ENCODE measurements at regions of chr2 and their contacts with region 1.

Region 1: DNA sequence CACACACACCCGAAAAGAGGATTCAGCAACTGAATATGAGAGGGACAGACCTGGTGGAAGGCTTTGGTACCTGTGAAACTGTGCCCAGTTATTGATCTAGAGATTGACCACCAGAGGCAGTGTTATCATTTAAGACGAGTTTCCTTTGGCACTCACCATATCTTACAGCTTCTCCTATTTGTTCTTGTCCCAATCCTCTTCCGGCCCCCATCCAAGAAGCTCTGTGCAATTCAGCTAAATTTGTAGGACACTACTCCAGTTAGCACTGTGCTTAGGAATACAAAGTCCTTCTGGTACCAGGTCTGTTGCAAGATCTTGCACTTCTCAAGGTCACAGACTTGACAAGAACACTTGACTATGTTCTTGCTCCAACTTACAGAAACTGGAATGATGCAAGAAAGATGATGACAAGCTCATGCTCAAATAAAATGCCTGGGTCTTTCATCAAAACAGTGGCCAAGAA is 177.7 kb downstream of the TMEM247 start:
- H3K4me3 Mint-ChIP-seq: no peak overlapping the region
- H3K27ac Mint-ChIP-seq: no peak overlapping the region
- H3K4me1 Mint-ChIP-seq: no peaks in the 10 kb centered on the region
- H3K27me3 Mint-ChIP-seq: peaks cover 11% of the 10 kb centered on the region

Region 2: DNA sequence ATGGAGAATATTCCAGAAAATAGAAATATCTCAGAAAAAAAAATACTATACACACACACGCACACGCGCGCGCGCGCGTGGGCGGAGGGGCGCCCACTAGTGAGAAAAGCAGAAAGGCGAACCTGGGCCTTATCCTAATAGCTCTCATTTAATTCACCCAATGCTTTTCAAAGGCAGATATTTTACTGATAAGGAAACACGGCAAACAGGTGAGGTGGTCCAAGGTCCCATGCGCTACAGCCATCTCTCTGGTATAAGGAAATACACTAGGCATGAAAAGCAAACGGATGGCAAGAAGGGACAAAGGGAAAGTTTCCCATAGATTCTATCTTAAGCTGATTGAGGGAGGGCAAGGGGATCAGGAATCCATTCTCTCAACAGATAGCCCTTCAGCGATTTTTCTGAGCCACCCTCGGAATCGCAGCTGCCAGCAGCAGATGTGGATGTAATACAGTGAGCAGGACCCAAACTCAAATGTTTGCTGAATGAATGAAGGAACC is 41.0 kb before region 1 on chr2:
- intact Hi-C with region 1: no loop called
- H3K4me3 Mint-ChIP-seq: peak overlapping the region; percentile 97
- H3K27ac Mint-ChIP-seq: peak overlapping the region; percentile 97
- H3K4me1 Mint-ChIP-seq: peaks cover 22% of the 10 kb centered on the region
- H3K27me3 Mint-ChIP-seq: no peaks in the 10 kb centered on the region

Region 3: GRCh38 chr2:46776687-46777327 is 119.7 kb after region 1 on chr2:
- intact Hi-C with region 1: loop called (anchors 5 kb)
- H3K4me3 Mint-ChIP-seq: no peak overlapping the region
- H3K27ac Mint-ChIP-seq: no peak overlapping the region
- H3K4me1 Mint-ChIP-seq: no peaks in the 10 kb centered on the region
- H3K27me3 Mint-ChIP-seq: no peaks in the 10 kb centered on the region

Region 4: DNA sequence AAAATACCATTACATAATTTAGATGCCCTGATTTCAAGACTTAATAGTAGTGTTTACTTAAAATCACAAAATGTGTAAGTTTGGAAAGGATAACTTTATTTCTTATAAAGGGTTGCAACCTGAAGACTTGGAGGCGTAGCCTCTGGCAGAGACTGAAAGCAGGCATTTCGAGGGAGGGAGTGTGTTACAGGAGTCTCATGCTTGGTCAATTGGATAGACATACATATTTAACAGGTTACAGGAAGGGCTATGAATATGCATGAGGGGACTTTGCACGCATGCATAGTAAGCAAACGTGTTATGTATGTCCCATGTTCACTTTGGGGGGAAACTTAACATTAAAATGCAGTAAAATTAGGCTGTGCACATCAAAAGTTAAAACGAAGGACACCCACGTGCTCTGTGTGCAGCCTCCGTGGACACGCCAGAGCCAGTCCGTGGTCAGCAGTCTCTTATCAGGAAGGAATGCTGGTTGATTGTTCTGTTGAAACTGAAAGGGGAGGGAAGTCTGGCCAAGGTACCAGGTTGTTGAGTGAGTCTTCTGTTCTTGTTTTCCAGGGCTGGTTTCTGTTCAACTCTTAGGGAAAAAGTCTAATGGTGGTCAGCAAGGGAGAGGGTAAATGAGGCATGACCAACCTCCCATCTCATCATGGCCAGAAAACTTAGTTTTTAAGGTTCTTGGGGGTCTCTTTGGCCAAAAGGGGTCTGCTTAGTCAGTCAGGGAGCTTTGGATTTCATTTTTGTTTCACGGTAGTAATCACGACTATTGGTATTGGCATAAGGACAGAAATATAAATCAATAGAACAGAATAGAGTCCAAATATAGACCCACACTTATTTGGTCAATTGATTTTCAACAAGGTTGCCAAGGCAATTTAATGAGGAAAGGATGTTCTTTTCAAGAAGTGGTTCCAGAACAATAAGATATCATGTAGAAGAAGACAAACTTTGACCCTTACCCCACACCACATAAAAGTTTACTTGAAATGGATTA is 136.6 kb after region 1 on chr2:
- intact Hi-C with region 1: no loop called
- H3K4me3 Mint-ChIP-seq: no peak overlapping the region
- H3K27ac Mint-ChIP-seq: no peak overlapping the region
- H3K4me1 Mint-ChIP-seq: no peaks in the 10 kb centered on the region
- H3K27me3 Mint-ChIP-seq: peaks cover 6% of the 10 kb centered on the region

Region 5: DNA sequence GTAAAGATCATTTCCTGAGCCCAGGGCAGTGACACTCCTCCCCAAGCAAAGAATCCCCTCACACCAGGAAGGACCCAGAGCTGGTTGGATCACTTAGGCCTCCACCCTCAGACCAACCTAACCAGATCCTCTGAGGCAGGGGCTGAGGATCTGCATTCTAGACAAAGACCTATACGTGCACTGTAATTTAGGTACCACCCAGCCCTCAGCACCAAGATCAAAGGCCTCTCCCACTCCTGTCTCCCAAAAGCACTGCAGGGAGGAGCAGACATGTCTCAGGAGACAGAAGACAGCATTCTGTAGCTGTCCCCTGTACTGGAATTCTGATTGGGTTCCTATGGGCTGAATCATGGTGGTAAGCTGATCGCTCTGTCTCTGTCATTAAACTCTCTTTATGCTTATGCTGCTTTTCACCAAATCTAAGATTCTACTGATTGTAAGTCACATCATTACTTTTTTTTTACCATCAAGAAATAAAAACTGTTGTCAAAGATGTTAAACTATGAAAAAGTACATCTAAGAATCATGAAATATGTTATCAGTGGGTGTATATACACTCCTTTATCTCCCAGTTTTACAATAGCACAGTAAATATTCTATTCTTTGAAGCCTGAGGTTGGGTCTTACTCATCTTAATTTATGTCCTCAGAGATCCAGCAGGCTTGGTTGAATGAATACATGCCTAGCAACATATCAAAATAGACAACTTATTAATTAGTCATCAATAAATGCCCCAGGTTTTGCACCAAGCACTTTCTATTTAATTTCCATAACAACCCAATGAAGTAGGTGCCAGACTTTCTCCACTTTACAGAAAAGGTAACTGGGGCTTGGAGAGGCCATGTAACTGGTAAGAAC is 230.2 kb after region 1 on chr2:
- intact Hi-C with region 1: loop called (anchors 1 kb)
- H3K4me3 Mint-ChIP-seq: no peak overlapping the region
- H3K27ac Mint-ChIP-seq: no peak overlapping the region
- H3K4me1 Mint-ChIP-seq: peaks cover 6% of the 10 kb centered on the region
- H3K27me3 Mint-ChIP-seq: peaks cover 16% of the 10 kb centered on the region

Measured in dendritic cell treated with granulocyte-macrophage colony-stimulating factor and Interleukin-4, amounts not matched to agents 40 ng/mL and 50 ng/mL, for 4 days (primary cell).